Caco-2 (cell line): ENCODE measurements at regions of chrX and their contacts with region 1.

Region 1: DNA sequence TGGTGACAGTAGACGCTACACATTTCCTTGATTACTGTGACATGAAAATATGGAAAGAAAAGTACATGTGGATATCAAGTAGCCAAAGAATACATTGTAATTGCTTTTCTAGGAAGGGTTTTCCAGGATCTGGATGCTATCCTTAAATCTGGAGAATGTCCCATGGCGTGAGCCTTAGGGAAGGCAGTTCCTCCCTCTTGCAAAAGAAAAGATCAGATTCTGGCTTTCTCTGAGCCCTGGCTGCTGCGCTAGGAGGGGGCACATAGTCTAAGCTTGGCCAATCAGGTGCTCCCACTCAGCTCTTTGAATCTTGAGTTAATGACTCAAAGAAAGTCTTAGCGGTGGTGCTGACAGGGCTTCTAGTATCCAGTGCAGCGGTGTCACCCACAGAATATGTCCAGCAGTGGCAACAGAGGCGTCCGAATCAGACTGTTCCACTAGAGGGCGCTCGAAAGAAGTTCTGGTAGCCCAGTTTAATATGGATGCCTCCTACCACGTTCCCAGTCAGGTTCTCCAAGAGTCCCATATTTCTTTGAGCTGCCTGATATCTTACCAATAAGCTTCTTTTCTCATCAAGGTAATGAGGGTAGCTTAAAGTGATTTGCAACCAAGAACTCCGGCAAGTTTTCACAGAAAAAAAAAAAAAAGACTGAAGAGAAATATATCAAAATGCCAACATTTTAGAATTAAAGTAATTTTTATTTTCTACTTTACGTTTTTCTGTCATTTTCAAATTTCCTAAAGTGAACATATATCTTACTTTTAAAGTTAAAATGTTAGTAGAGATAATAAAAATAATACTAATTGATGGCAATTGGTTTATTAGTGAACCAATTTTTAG is 213.4 kb upstream of the S100G start:
- DNase-seq: peak; percentile 66 to 72
- H3K4me3 ChIP-seq: no peak overlapping the region
- H3K4me3 Mint-ChIP-seq: no peak overlapping the region
- H3K27ac Mint-ChIP-seq: no peak overlapping the region
- H3K4me1 ChIP-seq: no peaks in the 10 kb centered on the region
- H3K4me1 Mint-ChIP-seq: no peaks in the 10 kb centered on the region
- H3K27me3 ChIP-seq: no peaks in the 10 kb centered on the region
- H3K27me3 Mint-ChIP-seq: no peaks in the 10 kb centered on the region
- CTCF ChIP-seq: peak; percentile 42 to 45

Region 2: DNA sequence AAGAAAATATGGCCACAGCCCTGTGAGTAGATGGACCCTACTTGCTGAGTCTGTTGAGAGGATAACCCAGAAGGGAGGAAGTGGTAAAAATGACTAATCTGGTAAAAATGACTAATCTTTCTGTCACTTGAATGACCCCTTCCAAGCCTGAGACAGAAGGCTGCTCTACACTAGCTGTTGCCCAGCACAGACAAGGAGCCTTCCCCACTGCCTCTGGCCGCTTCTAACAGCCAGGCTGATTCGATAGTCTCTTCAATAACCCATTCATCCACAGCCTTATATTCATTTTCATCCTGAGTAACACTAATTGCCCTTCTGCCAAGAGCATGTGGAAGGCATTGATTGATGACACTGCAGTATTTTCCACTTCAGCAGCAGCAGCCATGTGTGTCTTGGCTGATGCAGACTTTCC is 250.8 kb before region 1 on chrX:
- CTCF ChIA-PET with region 1: no interaction called
- POLR2A ChIA-PET with region 1: no interaction called
- intact Hi-C with region 1: no loop called
- DNase-seq: no peak
- H3K4me3 ChIP-seq: no peak overlapping the region
- H3K4me3 Mint-ChIP-seq: no peak overlapping the region
- H3K27ac Mint-ChIP-seq: peak overlapping the region; percentile 23
- H3K4me1 ChIP-seq: no peaks in the 10 kb centered on the region
- H3K4me1 Mint-ChIP-seq: peaks cover 3% of the 10 kb centered on the region
- H3K27me3 ChIP-seq: no peaks in the 10 kb centered on the region
- H3K27me3 Mint-ChIP-seq: no peaks in the 10 kb centered on the region
- CTCF ChIP-seq: no peak

Region 3: DNA sequence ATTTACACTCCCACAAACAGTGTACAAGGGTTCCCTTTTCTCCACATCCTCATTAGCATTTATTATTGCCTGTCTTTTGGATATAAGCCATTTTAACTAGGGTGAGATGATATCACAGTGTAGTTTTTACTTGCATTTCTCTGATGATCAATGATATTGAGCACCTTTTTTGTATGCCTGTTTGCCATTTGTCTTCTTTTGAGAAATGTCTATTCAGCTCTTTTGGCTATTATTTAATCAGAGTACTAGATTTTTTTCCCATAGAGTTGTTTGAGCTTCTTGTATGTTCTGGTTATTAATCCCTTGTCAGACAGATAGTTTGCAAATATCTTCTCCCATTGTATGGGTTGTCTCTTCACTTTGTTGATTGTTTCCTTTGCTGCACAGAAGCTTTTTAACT is 78.7 kb before region 1 on chrX:
- CTCF ChIA-PET with region 1: no interaction called
- POLR2A ChIA-PET with region 1: no interaction called
- intact Hi-C with region 1: no loop called
- DNase-seq: no peak
- H3K4me3 ChIP-seq: no peak overlapping the region
- H3K4me3 Mint-ChIP-seq: no peak overlapping the region
- H3K27ac Mint-ChIP-seq: no peak overlapping the region
- H3K4me1 ChIP-seq: no peaks in the 10 kb centered on the region
- H3K4me1 Mint-ChIP-seq: no peaks in the 10 kb centered on the region
- H3K27me3 ChIP-seq: no peaks in the 10 kb centered on the region
- H3K27me3 Mint-ChIP-seq: no peaks in the 10 kb centered on the region
- CTCF ChIP-seq: no peak

Region 4: GRCh38 chrX:16610121-16610621 is 173.6 kb after region 1 on chrX:
- CTCF ChIA-PET with region 1: no interaction called
- POLR2A ChIA-PET with region 1: no interaction called
- intact Hi-C with region 1: loop called (anchors 1 kb)
- DNase-seq: no peak
- H3K4me3 ChIP-seq: no peak overlapping the region
- H3K4me3 Mint-ChIP-seq: no peak overlapping the region
- H3K27ac Mint-ChIP-seq: no peak overlapping the region
- H3K4me1 ChIP-seq: peaks cover 10% of the 10 kb centered on the region; the same call in 1 of the 2 replicates
- H3K4me1 Mint-ChIP-seq: no peaks in the 10 kb centered on the region
- H3K27me3 ChIP-seq: no peaks in the 10 kb centered on the region
- H3K27me3 Mint-ChIP-seq: no peaks in the 10 kb centered on the region
- CTCF ChIP-seq: no peak

Region 5: GRCh38 chrX:16670998-16671397 is 234.4 kb after region 1 on chrX:
- CTCF ChIA-PET with region 1: no interaction called
- POLR2A ChIA-PET with region 1: no interaction called
- intact Hi-C with region 1: loop called (anchors 1 kb)
- DNase-seq: peak in 1 of 2 experiments; percentile 19
- H3K4me3 ChIP-seq: no peak overlapping the region
- H3K4me3 Mint-ChIP-seq: no peak overlapping the region
- H3K27ac Mint-ChIP-seq: no peak overlapping the region
- H3K4me1 ChIP-seq: no peaks in the 10 kb centered on the region
- H3K4me1 Mint-ChIP-seq: no peaks in the 10 kb centered on the region
- H3K27me3 ChIP-seq: no peaks in the 10 kb centered on the region
- H3K27me3 Mint-ChIP-seq: no peaks in the 10 kb centered on the region
- CTCF ChIP-seq: peak in 1 of 2 experiments; percentile 24